ENCODE measurements at regions of chr10 and their contacts with region 1.

Region 1: GRCh38 chr10:6088721-6089390 is at the start of gene RBM17:
- DNase-seq: peak; percentile 97
- ATAC-seq: peak; percentile 96
- H3K4me3 ChIP-seq: peak within 1 kb of the TSS; percentile 99
- H3K27ac ChIP-seq: peak within 1 kb of the TSS; percentile 91
- H3K4me1 ChIP-seq: peaks cover 14% of the 10 kb centered on the region
- H3K27me3 ChIP-seq: no peaks in the 10 kb centered on the region
- CTCF ChIP-seq: peak; percentile 100
- POLR2A ChIP-seq: peak; percentile 50; the same call in 1 of the 2 replicates
- RAD21 ChIP-seq: peak; percentile 68
- total RNA-seq, gene RBM17: 24.6 and 35.6 TPM in 2 replicates

Region 2: DNA sequence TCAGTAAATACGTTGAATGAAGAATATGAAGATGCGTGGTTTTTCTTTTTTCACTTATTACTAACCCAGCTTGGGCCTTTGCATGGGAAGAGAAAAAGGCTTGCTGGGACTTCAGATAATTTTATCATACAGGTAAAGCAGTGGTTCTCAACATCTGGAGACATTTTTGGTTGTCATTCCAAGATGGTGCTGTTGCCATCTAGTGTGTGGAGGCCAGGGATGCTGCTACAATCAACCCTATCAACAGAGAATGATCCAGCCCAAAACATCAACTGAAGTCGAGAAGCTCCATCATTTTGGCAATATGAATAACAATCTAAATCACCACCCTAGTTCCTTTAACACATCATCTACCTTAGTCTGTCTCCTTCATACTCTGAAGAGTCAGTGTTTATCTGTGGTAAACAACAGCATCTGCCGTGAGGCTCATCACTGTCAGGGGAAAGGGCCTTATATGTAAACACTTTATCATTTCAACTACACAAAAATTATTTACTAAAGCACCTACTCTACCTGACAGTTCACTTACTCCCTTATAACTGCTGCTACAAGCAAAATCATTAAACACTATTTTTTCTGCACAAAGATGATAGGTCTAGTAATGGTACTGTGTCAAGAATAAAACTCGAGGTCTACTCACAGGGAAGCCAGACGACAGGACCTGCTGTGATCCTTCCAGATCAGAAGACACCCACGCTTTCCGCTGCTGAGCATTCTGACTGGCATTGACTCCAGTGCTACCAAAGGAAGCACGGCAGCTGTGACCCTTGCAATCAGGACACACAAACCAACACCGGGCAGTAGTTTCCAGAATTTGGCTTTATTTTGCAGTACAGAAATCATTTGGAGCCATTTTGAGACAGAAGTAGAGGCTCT is 324.2 kb before region 1 on chr10:
- CTCF ChIA-PET with region 1: no interaction called
- POLR2A ChIA-PET with region 1: interaction called, 14 read pairs
- dilution Hi-C with region 1: no loop called
- in situ Hi-C with region 1: no loop called
- intact Hi-C with region 1: no loop called
- DNase-seq: no peak
- ATAC-seq: no peak
- H3K4me3 ChIP-seq: no peak overlapping the region
- H3K27ac ChIP-seq: no peak overlapping the region
- H3K4me1 ChIP-seq: no peaks in the 10 kb centered on the region
- H3K27me3 ChIP-seq: no peaks in the 10 kb centered on the region
- CTCF ChIP-seq: no peak
- POLR2A ChIP-seq: no peak
- RAD21 ChIP-seq: no peak

Region 3: DNA sequence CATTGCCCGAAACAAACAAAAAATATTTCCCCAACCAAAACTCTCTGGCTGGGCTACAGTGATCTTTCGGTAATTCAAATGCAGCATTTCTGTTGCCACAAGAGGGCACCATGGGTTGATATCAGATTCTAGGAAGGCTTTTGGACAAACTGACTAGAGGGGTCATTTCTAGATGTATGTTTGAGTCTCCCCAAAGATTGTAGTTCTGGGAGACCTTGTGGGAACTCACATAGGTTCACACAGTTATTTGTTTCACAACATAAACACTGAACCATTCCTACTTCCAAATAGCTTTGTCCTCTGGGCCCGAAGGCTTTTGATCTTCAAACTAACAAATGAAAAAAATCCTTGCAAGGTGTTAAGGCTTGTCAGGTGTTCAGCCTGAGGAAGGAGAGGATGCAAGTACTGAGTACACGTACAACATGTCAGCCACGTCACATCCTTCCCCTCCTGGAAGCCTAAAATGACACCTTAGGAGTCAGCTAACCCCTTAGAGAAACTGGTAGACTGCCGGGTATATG is 74.6 kb before region 1 on chr10:
- CTCF ChIA-PET with region 1: interaction called, 10 read pairs
- POLR2A ChIA-PET with region 1: no interaction called
- dilution Hi-C with region 1: no loop called
- in situ Hi-C with region 1: no loop called
- intact Hi-C with region 1: loop called (anchors 2 kb)
- DNase-seq: peak; percentile 42
- ATAC-seq: peak; percentile 75
- H3K4me3 ChIP-seq: no peak overlapping the region
- H3K27ac ChIP-seq: no peak overlapping the region
- H3K4me1 ChIP-seq: peaks cover 4% of the 10 kb centered on the region
- H3K27me3 ChIP-seq: peaks cover 11% of the 10 kb centered on the region
- CTCF ChIP-seq: peak; percentile 68
- POLR2A ChIP-seq: no peak
- RAD21 ChIP-seq: peak; percentile 60

Region 4: DNA sequence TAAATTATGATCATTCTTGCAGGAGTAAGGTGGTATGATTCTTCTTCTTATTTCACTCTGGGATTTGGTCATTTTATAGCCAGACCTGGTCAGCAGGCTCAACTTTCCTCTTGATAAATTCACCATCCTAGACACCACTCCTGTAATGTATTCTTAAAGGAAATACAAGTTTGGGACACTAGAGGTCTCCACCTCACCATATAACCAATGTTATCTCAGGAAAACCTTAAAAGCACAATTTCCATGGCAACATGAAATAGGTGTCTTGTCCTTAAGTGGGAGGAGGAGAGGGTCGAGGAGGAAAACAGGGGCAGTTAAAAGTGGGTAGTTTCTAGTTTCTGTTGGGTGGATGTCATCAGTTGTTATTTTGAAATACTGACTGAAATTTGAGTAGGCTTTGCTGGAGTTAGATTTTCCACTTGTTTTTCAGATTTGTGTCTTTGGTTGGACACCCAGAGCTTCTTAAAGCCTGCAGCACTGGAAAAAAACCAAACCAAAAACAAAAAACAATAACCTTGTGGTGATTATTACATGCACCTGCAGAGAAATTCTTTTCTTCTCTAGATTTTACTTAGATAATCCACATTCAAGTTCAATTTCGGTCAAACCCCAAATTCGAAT is 328.1 kb after region 1 on chr10:
- CTCF ChIA-PET with region 1: no interaction called
- POLR2A ChIA-PET with region 1: no interaction called
- dilution Hi-C with region 1: no loop called
- in situ Hi-C with region 1: no loop called
- intact Hi-C with region 1: no loop called
- DNase-seq: peak; percentile 57
- ATAC-seq: peak; percentile 89
- H3K4me3 ChIP-seq: no peak overlapping the region
- H3K27ac ChIP-seq: no peak overlapping the region
- H3K4me1 ChIP-seq: no peaks in the 10 kb centered on the region
- H3K27me3 ChIP-seq: peaks cover 15% of the 10 kb centered on the region
- CTCF ChIP-seq: peak; percentile 78
- POLR2A ChIP-seq: no peak
- RAD21 ChIP-seq: peak; percentile 78